Head of caudate nucleus (tissue), 42 donors: ENCODE measurements at regions of chr5 and their contacts with region 1.

Region 1: GRCh38 chr5:177516604-177517568 is at the start of gene DDX41:
- DNase-seq: peak; percentile 93 to 99 (median 97)

Region 2: GRCh38 chr5:177425801-177426565 is 90.9 kb before region 1 on chr5:
- intact Hi-C with region 1: loop called (anchors 5 kb)
- DNase-seq: peak; percentile 98 to 100 (median 100)

Region 3: GRCh38 chr5:177554474-177555111 is 37.7 kb after region 1 on chr5 and contains the start of gene FAM193B:
- intact Hi-C with region 1: loop called (anchors 2 kb)
- DNase-seq: peak; percentile 93 to 98 (median 96)